Mammary epithelial cell (primary cell): ENCODE measurements at regions of chr12 and their contacts with region 1.

Region 1: DNA sequence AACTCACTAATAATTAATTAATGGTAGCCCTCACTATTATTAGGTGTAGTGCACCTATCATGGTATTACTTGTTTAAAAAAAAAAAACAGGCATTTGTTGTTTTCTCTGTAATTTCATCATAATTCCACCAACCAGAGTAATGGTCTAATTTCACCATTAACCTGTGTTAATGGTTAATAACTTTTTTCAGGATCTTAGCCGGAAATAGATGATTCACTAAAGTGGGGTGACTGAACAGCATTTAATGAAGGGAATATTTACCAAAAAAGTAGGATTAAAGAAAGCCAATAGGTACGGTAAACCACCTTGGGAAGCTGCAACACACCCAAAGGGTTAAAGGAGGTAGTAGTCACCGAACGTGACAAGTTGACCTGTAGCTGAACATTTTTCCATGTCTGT is 13.0 kb downstream of the ETFBKMT start:
- DNase-seq: no peak
- H3K4me3 ChIP-seq: no peak overlapping the region
- H3K27ac ChIP-seq: no peak overlapping the region
- H3K4me1 ChIP-seq: no peaks in the 10 kb centered on the region
- H3K27me3 ChIP-seq: no peaks in the 10 kb centered on the region
- CTCF ChIP-seq: no peak

Region 2: GRCh38 chr12:31687101-31687527 is 14.6 kb after region 1 on chr12:
- CTCF ChIA-PET with region 1: no interaction called
- dilution Hi-C with region 1: no loop called
- in situ Hi-C with region 1: no loop called
- intact Hi-C with region 1: no loop called
- DNase-seq: no peak
- H3K4me3 ChIP-seq: no peak overlapping the region
- H3K27ac ChIP-seq: no peak overlapping the region
- H3K4me1 ChIP-seq: no peaks in the 10 kb centered on the region
- H3K27me3 ChIP-seq: no peaks in the 10 kb centered on the region
- CTCF ChIP-seq: no peak

Region 3: DNA sequence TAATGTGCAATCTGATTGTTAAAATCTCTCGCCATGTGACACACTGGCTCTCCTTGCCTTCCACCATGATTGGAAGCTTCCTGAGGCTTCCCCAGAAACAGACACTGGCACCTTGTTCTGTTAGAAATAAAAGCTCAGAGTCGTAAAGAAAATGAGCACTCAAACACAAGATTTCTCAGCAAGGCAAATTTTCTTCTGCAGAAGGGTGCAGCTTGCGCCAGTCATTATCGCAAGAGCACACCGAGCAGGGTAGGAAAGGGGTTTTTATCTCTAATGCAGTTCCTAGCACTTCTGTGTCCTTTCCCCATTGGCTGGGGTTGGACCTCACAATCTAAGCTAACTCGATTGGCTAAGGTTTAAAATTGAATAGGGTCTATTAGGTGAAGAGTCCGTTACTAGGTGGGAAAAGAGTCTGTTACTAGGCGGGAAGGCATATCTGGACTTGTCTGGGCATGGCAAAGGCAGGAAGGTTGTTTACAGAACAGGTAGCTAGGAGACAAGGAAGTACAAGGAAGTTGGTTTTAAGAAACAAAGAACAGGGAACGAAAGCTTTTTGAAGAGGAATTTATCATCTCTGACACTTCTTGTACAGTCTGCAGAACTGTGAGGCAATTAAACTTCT is 371.5 kb after region 1 on chr12:
- CTCF ChIA-PET with region 1: no interaction called
- dilution Hi-C with region 1: loop called (anchors 5 kb)
- in situ Hi-C with region 1: no loop called
- intact Hi-C with region 1: no loop called
- DNase-seq: peak; percentile 26
- H3K4me3 ChIP-seq: no peak overlapping the region
- H3K27ac ChIP-seq: no peak overlapping the region
- H3K4me1 ChIP-seq: no peaks in the 10 kb centered on the region
- H3K27me3 ChIP-seq: no peaks in the 10 kb centered on the region
- CTCF ChIP-seq: no peak